Endothelial cell of umbilical vein (primary cell): ENCODE measurements at regions of chr9 and their contacts with region 1.

Region 1: GRCh38 chr9:35051069-35051967 is 21.1 kb downstream of the VCP start:
- DNase-seq: peak; percentile 56
- H3K4me3 ChIP-seq: no peak overlapping the region
- H3K27ac ChIP-seq: no peak overlapping the region
- H3K4me1 ChIP-seq: no peaks in the 10 kb centered on the region
- H3K27me3 ChIP-seq: no peaks in the 10 kb centered on the region
- CTCF ChIP-seq: peak; percentile 59 to 65
- POLR2A ChIP-seq: no peak

Region 2: GRCh38 chr9:34759432-34760134 is 291.7 kb before region 1 on chr9:
- CTCF ChIA-PET with region 1: interaction called, 34 read pairs
- POLR2A ChIA-PET with region 1: no interaction called
- dilution Hi-C with region 1: no loop called
- intact Hi-C with region 1: no loop called
- DNase-seq: no peak
- H3K4me3 ChIP-seq: no peak overlapping the region
- H3K27ac ChIP-seq: no peak overlapping the region
- H3K4me1 ChIP-seq: no peaks in the 10 kb centered on the region
- H3K27me3 ChIP-seq: peaks cover 0 to 2% of the 10 kb centered on the region in 2 experiments
- CTCF ChIP-seq: no peak
- POLR2A ChIP-seq: no peak

Region 3: GRCh38 chr9:34994260-34994899 is 56.9 kb before region 1 on chr9:
- CTCF ChIA-PET with region 1: interaction called, 56 read pairs
- POLR2A ChIA-PET with region 1: interaction called, 4 read pairs
- dilution Hi-C with region 1: no loop called
- intact Hi-C with region 1: no loop called
- DNase-seq: peak; percentile 64
- H3K4me3 ChIP-seq: no peak overlapping the region
- H3K27ac ChIP-seq: peak overlapping the region; percentile 79
- H3K4me1 ChIP-seq: peaks cover 42% of the 10 kb centered on the region
- H3K27me3 ChIP-seq: no peaks in the 10 kb centered on the region
- CTCF ChIP-seq: peak; percentile 67 to 71
- POLR2A ChIP-seq: no peak

Region 4: DNA sequence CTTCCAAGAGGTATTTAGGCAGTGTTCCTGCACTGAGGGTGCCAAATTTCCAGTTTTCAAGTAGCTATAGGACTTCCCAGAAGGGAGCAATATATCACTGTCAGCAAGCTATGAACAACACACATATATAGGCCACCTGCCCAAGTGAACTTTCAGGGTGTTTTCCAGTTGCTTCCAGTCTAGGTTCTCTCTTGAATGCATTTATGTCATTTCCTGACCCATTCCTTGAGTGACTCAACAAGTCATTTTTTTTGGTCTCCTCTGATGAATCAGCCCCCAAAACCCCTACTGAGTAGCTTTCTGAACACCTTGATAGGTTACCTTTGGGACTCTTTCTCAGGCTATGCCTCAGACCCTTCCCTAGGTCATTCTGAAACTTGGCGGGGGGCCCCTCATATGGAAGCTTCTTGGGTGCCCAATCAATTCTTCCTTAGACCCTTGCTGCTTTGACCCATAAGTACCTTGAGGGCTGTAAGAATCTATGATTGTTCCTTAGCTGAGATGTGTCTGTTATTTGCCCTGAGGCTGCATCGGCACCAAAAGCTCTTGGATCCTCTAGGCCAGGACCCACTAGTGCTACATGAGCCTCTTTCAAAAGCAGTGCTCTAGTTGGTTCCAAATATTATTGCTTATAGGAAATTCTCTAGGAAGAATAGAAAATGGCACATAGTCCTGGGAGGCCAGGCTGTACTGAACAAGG is 49.4 kb before region 1 on chr9:
- CTCF ChIA-PET with region 1: interaction called, 22 read pairs
- POLR2A ChIA-PET with region 1: interaction called, 3 read pairs
- dilution Hi-C with region 1: no loop called
- intact Hi-C with region 1: no loop called
- DNase-seq: peak; percentile 64
- H3K4me3 ChIP-seq: no peak overlapping the region
- H3K27ac ChIP-seq: no peak overlapping the region
- H3K4me1 ChIP-seq: no peaks in the 10 kb centered on the region
- H3K27me3 ChIP-seq: no peaks in the 10 kb centered on the region
- CTCF ChIP-seq: no peak
- POLR2A ChIP-seq: no peak

Region 5: GRCh38 chr9:35026671-35027070 is 24.6 kb before region 1 on chr9:
- CTCF ChIA-PET with region 1: interaction called, 29 read pairs
- POLR2A ChIA-PET with region 1: no interaction called
- dilution Hi-C with region 1: no loop called
- intact Hi-C with region 1: no loop called
- DNase-seq: peak; percentile 19
- H3K4me3 ChIP-seq: no peak overlapping the region
- H3K27ac ChIP-seq: no peak overlapping the region
- H3K4me1 ChIP-seq: peaks cover 9% of the 10 kb centered on the region
- H3K27me3 ChIP-seq: no peaks in the 10 kb centered on the region
- CTCF ChIP-seq: no peak
- POLR2A ChIP-seq: no peak

Region 6: GRCh38 chr9:35035851-35036701 is 15.2 kb before region 1 on chr9:
- CTCF ChIA-PET with region 1: interaction called, 25 read pairs
- POLR2A ChIA-PET with region 1: no interaction called
- dilution Hi-C with region 1: no loop called
- intact Hi-C with region 1: no loop called
- DNase-seq: peak; percentile 44
- H3K4me3 ChIP-seq: peak overlapping the region in 2 of 3 experiments; percentile 7 to 26
- H3K27ac ChIP-seq: no peak overlapping the region
- H3K4me1 ChIP-seq: peaks cover 7% of the 10 kb centered on the region
- H3K27me3 ChIP-seq: no peaks in the 10 kb centered on the region
- CTCF ChIP-seq: no peak
- POLR2A ChIP-seq: no peak

Region 7: DNA sequence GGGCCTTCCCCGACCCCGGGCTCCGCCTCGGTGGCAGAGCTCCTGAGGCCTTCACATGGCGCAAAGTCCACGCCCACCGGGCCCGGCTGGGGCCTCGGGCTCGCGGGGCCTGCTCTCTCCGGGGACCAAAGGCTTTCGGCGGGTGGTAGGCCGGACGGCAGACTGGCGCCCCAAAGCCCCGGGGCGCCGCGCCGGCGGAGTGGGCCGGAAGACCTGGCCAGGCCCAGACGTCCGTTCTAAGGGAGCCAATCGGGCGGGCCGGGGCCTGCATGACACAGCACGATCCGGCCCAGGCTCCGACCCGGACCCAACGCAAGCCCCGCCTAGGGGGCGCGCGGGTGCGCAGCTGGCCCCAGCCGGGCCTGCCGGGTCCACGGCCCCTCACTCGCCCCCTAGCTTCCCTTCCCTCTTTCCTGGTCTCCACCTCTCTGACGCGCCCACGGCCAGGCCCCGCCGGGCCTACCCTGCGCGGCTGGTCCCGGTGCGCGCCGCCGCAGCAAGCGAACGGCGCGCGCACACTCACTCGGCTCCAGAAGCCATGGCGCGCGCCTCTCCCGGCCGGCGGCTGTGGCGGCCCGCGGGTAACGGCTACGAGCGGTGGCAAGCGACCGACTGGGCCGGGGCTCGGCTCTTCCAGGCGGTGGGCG is 20.6 kb after region 1 on chr9:
- CTCF ChIA-PET with region 1: interaction called, 15 read pairs
- POLR2A ChIA-PET with region 1: no interaction called
- dilution Hi-C with region 1: no loop called
- intact Hi-C with region 1: no loop called
- DNase-seq: peak; percentile 85
- H3K4me3 ChIP-seq: peak overlapping the region; percentile 79 to 97 (median 96)
- H3K27ac ChIP-seq: peak overlapping the region; percentile 95
- H3K4me1 ChIP-seq: peaks cover 29% of the 10 kb centered on the region
- H3K27me3 ChIP-seq: no peaks in the 10 kb centered on the region
- CTCF ChIP-seq: peak; percentile 25 to 65
- POLR2A ChIP-seq: peak; percentile 51

Region 8: DNA sequence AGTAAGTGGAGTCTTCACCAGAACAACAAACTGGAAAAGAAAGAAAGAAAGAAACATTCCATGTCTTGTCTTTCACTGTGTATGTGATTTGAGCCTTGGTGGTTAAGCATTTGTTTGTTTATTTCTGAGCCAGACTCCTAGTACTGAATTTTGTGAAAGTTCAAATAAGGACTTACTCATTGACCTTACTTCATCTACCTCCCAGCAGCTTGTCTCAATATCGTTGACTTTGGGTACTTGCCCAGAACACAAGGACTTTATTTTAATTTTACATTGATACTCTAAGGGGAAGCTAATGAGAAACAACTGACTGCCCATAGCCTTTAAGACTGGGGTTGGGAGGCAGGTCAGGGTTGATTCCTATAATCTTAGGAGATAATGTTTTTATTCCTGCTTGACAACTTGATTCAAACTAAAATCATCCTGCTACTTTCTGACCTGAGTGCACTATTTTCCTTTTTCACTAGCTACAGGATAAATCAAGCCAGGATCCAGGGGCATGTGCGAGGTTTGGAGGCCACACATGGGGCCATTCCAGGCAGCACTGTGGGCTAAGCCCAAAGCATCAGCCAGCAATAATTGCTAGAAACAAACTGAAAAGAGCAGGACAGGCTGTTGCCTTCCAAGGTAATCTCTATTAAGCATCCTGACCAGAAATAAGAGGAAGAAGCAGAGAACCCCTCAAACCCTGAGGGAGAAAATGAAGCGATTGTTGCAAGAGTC is 299.7 kb after region 1 on chr9:
- CTCF ChIA-PET with region 1: no interaction called
- POLR2A ChIA-PET with region 1: no interaction called
- dilution Hi-C with region 1: no loop called
- intact Hi-C with region 1: no loop called
- DNase-seq: peak; percentile 83
- H3K4me3 ChIP-seq: no peak overlapping the region
- H3K27ac ChIP-seq: no peak overlapping the region
- H3K4me1 ChIP-seq: peaks cover 4% of the 10 kb centered on the region
- H3K27me3 ChIP-seq: no peaks in the 10 kb centered on the region
- CTCF ChIP-seq: no peak
- POLR2A ChIP-seq: no peak